ENCODE measurements at regions of chr2 and their contacts with region 1.

Region 1: DNA sequence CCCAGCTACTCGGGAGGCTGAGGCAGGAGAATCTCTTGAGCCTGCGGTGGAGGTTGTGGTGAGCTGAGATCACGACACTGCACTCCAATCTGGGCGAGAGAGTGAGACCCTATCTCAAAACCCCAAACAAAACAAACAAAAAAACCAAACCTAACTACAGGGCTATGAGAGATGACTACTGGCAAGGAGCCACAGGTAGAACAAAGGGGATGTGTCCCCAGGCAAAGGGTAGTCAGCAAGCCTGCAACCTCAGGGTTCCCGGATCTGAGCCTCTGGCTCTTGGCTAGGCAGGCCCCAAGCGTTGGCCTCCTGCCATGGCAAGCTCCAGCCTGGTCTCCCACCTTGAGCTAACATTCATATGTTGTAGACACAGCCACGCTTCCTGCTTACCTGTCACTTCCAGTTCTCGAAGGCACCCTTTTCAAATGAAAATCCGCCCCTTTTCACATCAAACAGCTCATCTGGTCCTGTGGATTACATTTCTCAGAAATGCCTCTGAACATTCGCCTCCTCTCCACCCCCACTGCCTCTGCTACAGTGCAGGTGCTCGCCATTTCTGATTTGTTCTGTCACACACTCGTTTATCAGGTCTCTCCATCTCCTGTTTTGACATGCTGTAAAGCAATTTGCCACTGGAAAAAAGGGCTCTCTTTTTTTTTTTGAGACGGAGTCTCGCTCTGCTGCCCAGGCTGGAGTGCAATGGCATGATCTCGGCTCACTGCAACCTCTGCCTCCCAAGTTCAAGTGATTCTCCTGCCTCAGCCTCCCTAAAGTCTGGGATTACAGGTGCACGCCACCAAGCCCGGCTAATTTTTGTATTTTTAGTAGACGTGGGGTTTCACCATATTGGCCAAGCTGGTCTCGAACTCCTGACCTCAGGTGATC is 13.1 kb upstream of the ACTR3 start:
- DNase-seq: peak; percentile 99
- ATAC-seq: peak; percentile 80
- H3K4me3 ChIP-seq: no peak overlapping the region
- H3K27ac ChIP-seq: peak overlapping the region; percentile 72
- H3K4me1 ChIP-seq: peaks cover 46% of the 10 kb centered on the region
- H3K27me3 ChIP-seq: no peaks in the 10 kb centered on the region
- CTCF ChIP-seq: no peak

Region 2: GRCh38 chr2:113818382-113818951 is 58.3 kb before region 1 on chr2:
- CTCF ChIA-PET with region 1: no interaction called
- POLR2A ChIA-PET with region 1: no interaction called
- intact Hi-C with region 1: loop called (anchors 2 kb)
- DNase-seq: peak; percentile 96
- ATAC-seq: peak; percentile 95
- H3K4me3 ChIP-seq: peak overlapping the region; percentile 51
- H3K27ac ChIP-seq: peak overlapping the region; percentile 36
- H3K4me1 ChIP-seq: peaks cover 17% of the 10 kb centered on the region
- H3K27me3 ChIP-seq: no peaks in the 10 kb centered on the region
- CTCF ChIP-seq: no peak

Region 3: DNA sequence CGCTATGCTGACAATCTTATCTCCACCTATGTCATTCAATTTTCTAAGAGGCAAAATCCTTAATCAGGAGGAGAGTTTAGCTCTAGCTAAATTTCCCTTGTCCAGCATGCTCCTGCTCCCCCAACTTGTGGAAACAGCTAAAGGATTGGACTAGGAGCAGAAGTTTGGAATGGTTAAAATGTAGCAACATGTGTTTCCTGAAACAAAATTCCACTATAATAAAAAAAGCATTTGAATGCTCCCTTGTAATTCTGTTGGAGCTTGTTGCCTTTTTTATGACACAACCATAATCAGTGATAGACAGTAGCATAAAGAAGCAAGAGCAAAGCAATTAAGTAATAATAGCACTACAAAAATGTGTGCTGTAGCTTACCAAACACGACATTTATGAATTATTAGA is 20.0 kb after region 1 on chr2:
- CTCF ChIA-PET with region 1: no interaction called
- POLR2A ChIA-PET with region 1: interaction called, 21 read pairs
- intact Hi-C with region 1: loop called (anchors 2 kb)
- DNase-seq: no peak
- ATAC-seq: no peak
- H3K4me3 ChIP-seq: no peak overlapping the region
- H3K27ac ChIP-seq: no peak overlapping the region
- H3K4me1 ChIP-seq: peaks cover 54% of the 10 kb centered on the region
- H3K27me3 ChIP-seq: no peaks in the 10 kb centered on the region
- CTCF ChIP-seq: no peak